ENCODE measurements at regions of chr16 and their contacts with region 1.

Region 1: DNA sequence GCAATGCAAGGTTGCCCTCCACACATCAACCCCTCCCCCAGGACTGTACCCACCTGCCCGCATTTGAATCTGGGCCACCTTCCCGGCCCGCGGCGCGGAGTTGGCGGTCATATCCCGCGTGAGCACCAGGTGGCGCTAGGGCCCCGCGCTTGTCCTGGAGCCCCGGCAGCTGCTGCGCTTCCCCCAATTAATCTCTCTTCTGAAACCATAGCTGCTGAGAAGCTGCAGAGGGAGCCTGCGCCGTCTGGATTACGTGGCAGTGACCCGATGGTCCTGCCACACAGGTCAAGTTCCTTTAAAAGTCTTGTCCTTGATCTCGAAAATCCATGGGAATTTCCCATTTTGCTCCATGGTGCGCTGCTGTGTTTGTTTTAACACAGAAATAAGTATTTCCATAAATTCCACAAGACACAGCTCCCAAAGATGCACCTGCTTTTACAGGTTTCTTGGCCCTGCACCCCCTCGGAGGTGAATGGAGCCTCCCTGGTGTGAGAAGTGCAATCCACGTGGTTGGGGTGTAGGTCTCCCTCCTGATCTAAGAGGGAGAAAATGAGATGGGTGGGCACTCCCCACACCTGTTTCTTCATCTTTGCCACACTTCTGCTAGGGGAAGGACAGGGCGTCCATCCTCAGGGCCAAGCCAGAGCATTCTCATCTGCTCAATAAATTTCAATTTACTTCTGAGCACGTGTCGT is 22.1 kb downstream of the COX4I1 start:
- DNase-seq: peak; percentile 74 to 90 (median 82)
- H3K4me3 ChIP-seq: no peak overlapping the region
- H3K27ac ChIP-seq: no peak overlapping the region
- H3K4me1 ChIP-seq: no peaks in the 10 kb centered on the region
- H3K27me3 ChIP-seq: no peaks in the 10 kb centered on the region
- CTCF ChIP-seq: peak; percentile 89 to 99 (median 96)
- POLR2A ChIP-seq: no peak

Region 2: GRCh38 chr16:85995541-85996423 is 174.2 kb after region 1 on chr16:
- intact Hi-C with region 1: loop called in 1 of 2 experiments (anchors 5 kb)
- DNase-seq: peak in 1 of 7 donors; percentile 42
- H3K4me3 ChIP-seq: no peak overlapping the region
- H3K27ac ChIP-seq: no peak overlapping the region
- H3K4me1 ChIP-seq: no peaks in the 10 kb centered on the region
- H3K27me3 ChIP-seq: no peaks in the 10 kb centered on the region
- CTCF ChIP-seq: no peak
- POLR2A ChIP-seq: no peak

Region 3: GRCh38 chr16:86016201-86016871 is 194.7 kb after region 1 on chr16:
- intact Hi-C with region 1: loop called (anchors 2 to 5 kb)
- DNase-seq: peak; percentile 23 to 65 (median 38)
- H3K4me3 ChIP-seq: no peak overlapping the region
- H3K27ac ChIP-seq: no peak overlapping the region
- H3K4me1 ChIP-seq: no peaks in the 10 kb centered on the region
- H3K27me3 ChIP-seq: no peaks in the 10 kb centered on the region
- CTCF ChIP-seq: peak; percentile 64 to 80 (median 72)
- POLR2A ChIP-seq: no peak

Measured in adrenal gland (tissue), 19 donors.